ENCODE measurements at regions of chr1 and their contacts with region 1.

Region 1: DNA sequence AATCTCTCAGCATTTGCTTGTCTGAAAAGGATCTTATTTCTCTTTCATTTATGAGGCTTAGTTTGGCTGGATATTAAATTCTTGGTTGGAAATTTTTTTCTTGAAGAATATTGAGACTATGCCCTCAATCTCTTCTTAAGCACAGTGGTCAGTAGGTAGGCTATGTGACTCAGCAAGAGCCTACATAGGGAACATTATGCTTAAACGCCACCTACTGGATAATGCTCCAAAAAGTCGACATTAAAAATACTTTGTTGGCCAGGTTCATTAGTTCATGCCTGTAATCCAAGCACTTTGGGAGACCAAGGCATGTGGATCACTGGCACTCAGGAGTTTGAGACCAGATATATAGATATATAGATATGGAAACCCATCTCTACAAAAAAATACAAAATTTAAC is 678.0 kb upstream of the USP24 start:
- DNase-seq: peak in 1 of 2 experiments; percentile 30
- H3K4me3 ChIP-seq: no peak overlapping the region
- H3K4me3 Mint-ChIP-seq: no peak overlapping the region
- H3K27ac Mint-ChIP-seq: no peak overlapping the region
- H3K4me1 ChIP-seq: no peaks in the 10 kb centered on the region
- H3K4me1 Mint-ChIP-seq: no peaks in the 10 kb centered on the region
- H3K27me3 ChIP-seq: no peaks in the 10 kb centered on the region
- H3K27me3 Mint-ChIP-seq: no peaks in the 10 kb centered on the region
- CTCF ChIP-seq: peak; percentile 24 to 31

Region 2: DNA sequence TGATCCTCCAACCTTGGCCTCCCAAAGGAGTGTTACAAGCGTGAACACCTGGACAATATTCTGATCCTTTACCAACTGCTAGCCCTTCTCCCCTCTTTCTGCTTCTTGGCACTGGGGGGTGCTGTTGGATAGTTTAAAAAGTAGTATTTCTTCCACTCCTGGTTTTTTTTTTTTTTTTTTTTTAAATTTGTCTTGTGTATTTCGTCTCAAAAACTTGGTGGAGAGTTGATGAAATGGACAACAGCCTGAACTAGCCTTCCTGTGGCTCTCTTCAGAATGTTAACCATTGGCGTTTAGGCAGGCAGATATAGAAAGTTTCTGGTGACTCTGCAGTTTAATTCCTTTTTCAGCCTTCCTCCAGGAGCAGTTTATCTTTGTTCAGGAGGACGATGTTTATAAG is 608.3 kb before region 1 on chr1:
- CTCF ChIA-PET with region 1: no interaction called
- POLR2A ChIA-PET with region 1: no interaction called
- intact Hi-C with region 1: loop called (anchors 10 kb)
- DNase-seq: peak in 1 of 2 experiments; percentile 53
- H3K4me3 ChIP-seq: no peak overlapping the region
- H3K4me3 Mint-ChIP-seq: no peak overlapping the region
- H3K27ac Mint-ChIP-seq: no peak overlapping the region
- H3K4me1 ChIP-seq: no peaks in the 10 kb centered on the region
- H3K4me1 Mint-ChIP-seq: no peaks in the 10 kb centered on the region
- H3K27me3 ChIP-seq: no peaks in the 10 kb centered on the region
- H3K27me3 Mint-ChIP-seq: no peaks in the 10 kb centered on the region
- CTCF ChIP-seq: peak; percentile 40 to 54

Region 3: DNA sequence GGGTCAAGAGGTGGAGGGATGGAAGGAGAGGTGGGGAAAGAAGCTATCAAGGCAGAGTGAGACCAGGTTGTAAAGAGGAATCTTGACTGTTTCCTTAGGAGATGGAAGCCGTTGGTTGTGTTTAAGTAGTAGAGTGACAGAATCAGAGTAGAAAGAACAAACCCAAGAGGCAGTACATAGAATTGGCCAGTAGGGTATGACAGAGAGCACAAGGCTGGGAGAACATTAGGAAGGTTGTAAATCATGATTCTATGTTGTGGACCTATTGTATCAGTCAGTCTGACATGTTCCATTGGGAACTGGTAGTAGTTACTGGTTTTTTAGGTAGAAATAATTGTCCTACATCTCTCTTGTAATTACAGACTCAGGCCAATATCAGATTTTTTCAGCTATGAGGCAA is 191.1 kb before region 1 on chr1:
- CTCF ChIA-PET with region 1: no interaction called
- POLR2A ChIA-PET with region 1: no interaction called
- intact Hi-C with region 1: loop called (anchors 10 kb)
- DNase-seq: peak in 1 of 2 experiments; percentile 32
- H3K4me3 ChIP-seq: no peak overlapping the region
- H3K4me3 Mint-ChIP-seq: no peak overlapping the region
- H3K27ac Mint-ChIP-seq: no peak overlapping the region
- H3K4me1 ChIP-seq: peaks cover 3% of the 10 kb centered on the region; the same call in 1 of the 2 replicates
- H3K4me1 Mint-ChIP-seq: no peaks in the 10 kb centered on the region
- H3K27me3 ChIP-seq: no peaks in the 10 kb centered on the region
- H3K27me3 Mint-ChIP-seq: no peaks in the 10 kb centered on the region
- CTCF ChIP-seq: peak; percentile 46 to 53

Region 4: DNA sequence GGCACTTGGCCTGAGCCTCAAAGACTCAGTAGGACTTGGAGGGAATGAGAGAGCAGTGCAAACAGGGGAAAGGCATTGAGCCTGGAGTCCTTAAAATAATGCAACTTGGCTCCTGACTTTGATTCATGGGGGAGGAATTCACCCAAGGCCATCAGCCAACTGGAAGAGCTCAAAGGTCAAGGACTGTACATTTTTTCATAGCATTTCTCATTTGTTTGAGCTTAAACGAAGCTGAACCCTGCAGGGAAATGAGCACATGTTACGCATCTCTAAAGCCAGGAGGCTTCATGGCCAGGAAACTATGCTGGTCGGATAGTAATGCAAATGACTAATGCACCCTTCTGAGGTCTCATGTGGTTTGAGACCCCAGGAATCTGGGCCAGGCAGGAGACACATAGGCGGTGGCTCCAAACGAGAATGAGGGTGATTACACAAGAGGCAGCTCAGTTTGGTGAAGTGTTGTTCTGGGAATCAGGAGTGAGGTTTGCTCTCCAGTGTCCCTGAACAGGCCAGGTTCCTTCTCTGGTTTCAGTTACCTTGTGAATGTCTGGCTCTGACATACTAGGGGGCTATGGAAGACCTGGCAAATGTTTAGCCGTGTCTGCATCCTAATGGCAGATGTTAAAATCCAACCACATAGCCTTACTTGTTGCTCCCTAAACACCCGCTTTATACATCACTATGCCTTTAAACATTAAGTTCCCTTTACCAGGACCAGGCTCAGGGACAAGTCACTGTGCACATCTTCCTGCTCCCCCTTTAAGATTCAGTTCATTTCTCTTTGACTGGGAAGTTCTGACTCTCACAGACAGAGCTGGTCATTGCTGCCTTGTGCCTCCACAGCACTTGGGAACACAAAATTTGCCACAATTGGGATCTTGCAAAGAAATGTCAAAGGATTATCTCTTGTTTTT is 174.1 kb before region 1 on chr1:
- CTCF ChIA-PET with region 1: no interaction called
- POLR2A ChIA-PET with region 1: no interaction called
- intact Hi-C with region 1: no loop called
- DNase-seq: peak; percentile 25 to 34
- H3K4me3 ChIP-seq: no peak overlapping the region
- H3K4me3 Mint-ChIP-seq: no peak overlapping the region
- H3K27ac Mint-ChIP-seq: no peak overlapping the region
- H3K4me1 ChIP-seq: peaks cover 16% of the 10 kb centered on the region
- H3K4me1 Mint-ChIP-seq: peaks cover 18% of the 10 kb centered on the region
- H3K27me3 ChIP-seq: no peaks in the 10 kb centered on the region
- H3K27me3 Mint-ChIP-seq: no peaks in the 10 kb centered on the region
- CTCF ChIP-seq: no peak

Region 5: DNA sequence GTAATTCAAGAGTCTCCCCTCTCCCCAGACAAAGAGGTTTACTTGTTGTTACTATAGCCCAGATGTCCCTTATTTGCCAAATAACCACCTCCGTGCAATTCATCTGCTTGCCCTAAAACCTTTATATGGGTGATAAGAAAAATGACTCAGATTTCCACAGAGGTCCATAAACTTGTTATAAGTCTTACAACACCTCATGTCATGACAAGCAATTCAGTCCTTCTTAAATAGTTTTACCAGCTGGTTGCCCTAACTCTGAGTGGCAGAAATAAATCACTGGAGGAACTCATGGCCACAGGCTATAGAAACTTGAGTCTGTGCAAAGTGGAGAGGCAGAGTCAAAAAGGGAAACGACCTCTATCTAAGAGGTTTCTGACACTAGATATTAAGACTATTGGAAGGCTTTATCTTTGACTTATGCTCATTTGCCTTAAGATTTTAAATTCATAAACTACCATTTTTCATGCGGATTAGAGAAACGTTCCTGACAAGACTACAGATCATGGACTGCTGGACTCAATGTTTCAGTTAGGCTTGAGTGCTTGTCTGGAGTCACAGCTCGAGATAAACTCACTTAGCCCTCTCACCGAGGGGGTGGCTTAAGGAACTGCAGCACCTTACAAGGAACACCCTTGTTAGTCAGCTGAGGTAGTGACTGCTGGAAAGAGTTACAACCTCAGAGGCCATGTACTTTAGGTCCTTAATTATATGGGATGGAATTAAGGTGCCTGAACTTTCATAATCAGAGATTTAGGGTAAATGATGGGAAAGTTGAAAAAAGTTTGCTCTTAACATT is 15.5 kb before region 1 on chr1:
- CTCF ChIA-PET with region 1: no interaction called
- POLR2A ChIA-PET with region 1: no interaction called
- intact Hi-C with region 1: no loop called
- DNase-seq: no peak
- H3K4me3 ChIP-seq: no peak overlapping the region
- H3K4me3 Mint-ChIP-seq: no peak overlapping the region
- H3K27ac Mint-ChIP-seq: no peak overlapping the region
- H3K4me1 ChIP-seq: no peaks in the 10 kb centered on the region
- H3K4me1 Mint-ChIP-seq: no peaks in the 10 kb centered on the region
- H3K27me3 ChIP-seq: no peaks in the 10 kb centered on the region
- H3K27me3 Mint-ChIP-seq: no peaks in the 10 kb centered on the region
- CTCF ChIP-seq: no peak

Region 6: GRCh38 chr1:55931081-55931940 is 38.2 kb after region 1 on chr1:
- CTCF ChIA-PET with region 1: no interaction called
- POLR2A ChIA-PET with region 1: no interaction called
- intact Hi-C with region 1: no loop called
- DNase-seq: no peak
- H3K4me3 ChIP-seq: no peak overlapping the region
- H3K4me3 Mint-ChIP-seq: no peak overlapping the region
- H3K27ac Mint-ChIP-seq: no peak overlapping the region
- H3K4me1 ChIP-seq: no peaks in the 10 kb centered on the region
- H3K4me1 Mint-ChIP-seq: no peaks in the 10 kb centered on the region
- H3K27me3 ChIP-seq: no peaks in the 10 kb centered on the region
- H3K27me3 Mint-ChIP-seq: no peaks in the 10 kb centered on the region
- CTCF ChIP-seq: no peak

Region 7: GRCh38 chr1:56081173-56081572 is 188.0 kb after region 1 on chr1:
- CTCF ChIA-PET with region 1: no interaction called
- POLR2A ChIA-PET with region 1: no interaction called
- intact Hi-C with region 1: no loop called
- DNase-seq: no peak
- H3K4me3 ChIP-seq: no peak overlapping the region
- H3K4me3 Mint-ChIP-seq: no peak overlapping the region
- H3K27ac Mint-ChIP-seq: no peak overlapping the region
- H3K4me1 ChIP-seq: no peaks in the 10 kb centered on the region
- H3K4me1 Mint-ChIP-seq: no peaks in the 10 kb centered on the region
- H3K27me3 ChIP-seq: no peaks in the 10 kb centered on the region
- H3K27me3 Mint-ChIP-seq: no peaks in the 10 kb centered on the region
- CTCF ChIP-seq: no peak